Activated B cell treated with CpG ODN at 0.5 μM for 24 hours (primary cell): ENCODE measurements at regions of chr7 and their contacts with region 1.

Region 1: DNA sequence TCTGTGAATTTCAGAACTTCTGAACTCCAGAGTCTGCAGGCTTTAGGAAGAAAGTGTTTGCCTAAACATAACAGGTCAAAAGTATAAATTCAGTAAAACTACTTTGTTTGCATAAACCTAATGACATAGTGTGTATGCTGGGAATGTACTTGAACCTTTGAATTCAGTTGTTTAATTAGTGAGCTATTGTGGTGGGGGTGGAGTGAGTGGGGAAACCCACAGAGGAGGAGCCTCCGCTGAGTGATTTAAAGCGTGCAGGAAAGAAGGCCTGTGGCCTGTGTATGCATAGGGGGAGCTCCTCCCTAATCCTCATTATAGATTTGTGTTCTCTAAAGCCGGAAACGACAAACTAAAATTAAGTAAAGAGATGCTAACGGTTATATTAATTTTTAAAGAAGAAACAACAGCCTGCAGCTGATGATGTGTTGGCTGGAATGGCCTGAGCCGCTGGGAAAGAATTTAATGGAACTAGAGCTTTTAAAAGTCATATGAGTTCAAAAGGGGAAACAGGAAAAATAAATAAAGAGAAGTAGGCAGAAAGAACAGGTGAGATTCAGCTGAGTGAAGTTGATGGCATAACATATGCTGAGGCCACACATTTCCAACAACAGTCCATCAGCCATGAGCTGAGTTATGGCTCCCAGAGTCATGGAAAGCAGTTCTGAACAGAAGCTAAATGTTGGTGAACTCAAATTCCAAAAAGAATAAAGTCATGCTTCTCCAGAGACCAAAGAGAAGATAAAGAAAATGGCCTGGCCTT is 595.0 kb downstream of the GRM8 start:
- DNase-seq: no peak
- ATAC-seq: peak; percentile 90
- H3K4me3 Mint-ChIP-seq: no peak overlapping the region
- H3K27ac Mint-ChIP-seq: peak overlapping the region; percentile 84
- H3K4me1 Mint-ChIP-seq: peaks cover 26% of the 10 kb centered on the region
- H3K27me3 Mint-ChIP-seq: no peaks in the 10 kb centered on the region
- CTCF ChIP-seq: no peak

Region 2: DNA sequence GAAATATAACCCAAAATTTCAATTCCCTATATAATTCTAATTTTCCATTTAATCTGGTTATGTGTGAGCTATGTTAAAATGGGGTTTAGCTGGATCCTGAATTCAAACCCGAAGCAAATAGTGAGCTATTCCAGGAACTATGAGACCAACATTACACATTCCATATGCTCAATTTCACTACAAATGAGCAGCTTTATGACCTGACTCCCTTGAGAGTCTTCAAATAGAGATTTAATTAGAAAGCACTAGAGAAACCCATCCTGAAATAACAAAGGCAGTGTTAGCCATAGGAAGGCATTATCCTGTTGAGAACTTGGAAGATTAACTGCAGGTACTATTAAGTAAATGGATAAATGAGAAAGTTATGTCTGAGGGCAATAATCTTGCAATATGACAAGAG is 295.0 kb before region 1 on chr7:
- CTCF ChIA-PET with region 1: no interaction called
- POLR2A ChIA-PET with region 1: no interaction called
- intact Hi-C with region 1: no loop called
- DNase-seq: no peak
- ATAC-seq: no peak
- H3K4me3 Mint-ChIP-seq: no peak overlapping the region
- H3K27ac Mint-ChIP-seq: no peak overlapping the region
- H3K4me1 Mint-ChIP-seq: no peaks in the 10 kb centered on the region
- H3K27me3 Mint-ChIP-seq: no peaks in the 10 kb centered on the region
- CTCF ChIP-seq: no peak

Region 3: GRCh38 chr7:126700807-126701604 is 43.2 kb after region 1 on chr7:
- CTCF ChIA-PET with region 1: no interaction called
- POLR2A ChIA-PET with region 1: interaction called, 5 read pairs
- intact Hi-C with region 1: loop called (anchors 1 kb)
- DNase-seq: peak; percentile 23
- ATAC-seq: peak; percentile 95
- H3K4me3 Mint-ChIP-seq: no peak overlapping the region
- H3K27ac Mint-ChIP-seq: no peak overlapping the region
- H3K4me1 Mint-ChIP-seq: peaks cover 26% of the 10 kb centered on the region
- H3K27me3 Mint-ChIP-seq: no peaks in the 10 kb centered on the region
- CTCF ChIP-seq: no peak